K562 (cell line): ENCODE measurements at regions of chr9 and their contacts with region 1.

Region 1: DNA sequence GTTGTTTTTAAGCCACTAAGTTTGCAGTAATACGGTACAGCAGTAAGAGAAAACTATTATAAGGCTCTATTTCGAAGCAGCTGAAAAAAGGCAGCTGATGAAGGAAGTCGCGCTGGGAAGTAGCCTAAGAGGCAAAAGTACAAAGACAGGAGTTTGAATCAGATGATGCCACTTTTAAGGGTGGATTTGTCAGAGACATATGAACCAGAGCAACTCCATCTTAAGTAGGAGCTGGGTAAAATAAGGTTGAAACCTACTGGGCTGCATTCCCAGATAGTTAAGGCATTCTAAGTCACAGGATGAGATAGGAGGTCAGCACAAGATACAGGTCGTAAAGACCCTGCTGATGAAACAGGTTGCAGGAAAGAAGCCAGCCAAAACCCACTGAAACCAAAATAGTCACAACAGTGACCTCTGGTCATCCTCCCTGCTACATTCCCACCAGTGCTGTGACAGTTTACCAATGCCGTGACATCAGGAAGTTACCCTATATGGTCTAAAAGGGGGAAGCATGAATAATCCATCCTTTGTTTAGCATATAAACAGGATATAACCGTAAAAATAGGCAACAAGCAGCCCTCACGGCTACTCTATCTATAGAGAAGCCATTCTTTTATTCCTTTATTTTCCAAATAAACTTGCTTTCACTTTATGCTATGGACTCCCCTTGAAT is 91.8 kb upstream of the PRSS3 start:
- DNase-seq: no peak
- ATAC-seq: no peak
- H3K4me3 ChIP-seq: no peak overlapping the region
- H3K27ac ChIP-seq: no peak overlapping the region
- H3K4me1 ChIP-seq: no peaks in the 10 kb centered on the region
- H3K27me3 ChIP-seq: no peaks in the 10 kb centered on the region
- CTCF ChIP-seq: no peak
- EP300 ChIP-seq: no peak
- POLR2A ChIP-seq: no peak
- RAD21 ChIP-seq: no peak

Region 2: DNA sequence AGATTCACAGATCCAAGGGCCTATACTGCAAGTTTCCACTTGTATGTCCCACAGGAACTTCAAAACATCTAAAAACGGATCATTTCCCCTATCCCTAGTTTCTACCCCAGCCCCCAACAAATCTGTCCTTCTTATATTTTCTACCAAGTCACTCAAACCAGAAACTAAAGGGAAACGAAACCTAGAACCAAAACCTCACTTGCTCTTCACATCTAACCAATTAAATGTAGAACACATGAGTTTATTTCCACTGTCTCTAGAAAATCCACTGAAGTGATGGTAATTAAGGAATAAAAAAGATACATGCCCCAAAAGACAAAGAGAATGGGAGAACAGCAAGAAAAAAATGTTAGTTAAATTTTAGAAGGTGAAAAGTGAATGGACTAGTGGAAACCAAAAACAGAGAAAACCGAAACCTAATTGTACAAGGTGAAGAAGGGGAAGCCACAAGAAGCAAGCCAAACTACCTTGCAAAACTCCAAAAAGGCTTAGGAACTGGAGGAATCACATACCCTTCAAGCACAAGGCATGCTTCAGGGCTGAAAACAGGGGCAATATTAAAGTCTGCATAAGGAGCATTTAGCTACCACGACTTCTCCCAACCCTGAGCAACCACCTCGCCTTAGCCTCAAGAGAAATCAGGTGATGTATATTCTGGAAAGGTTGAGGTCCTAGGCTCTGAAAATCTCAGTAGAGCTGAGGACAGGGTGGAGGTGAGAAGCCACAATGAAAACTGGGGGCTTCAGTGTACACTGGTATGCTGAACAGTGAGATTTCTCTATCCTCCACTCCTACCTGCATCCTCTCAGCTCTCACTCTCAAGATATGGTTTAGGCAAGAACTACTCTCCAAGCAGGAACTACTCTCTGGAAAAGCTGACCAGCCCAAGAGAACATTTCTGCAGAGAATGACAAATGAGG is 638.1 kb before region 1 on chr9:
- CTCF ChIA-PET with region 1: no interaction called
- POLR2A ChIA-PET with region 1: no interaction called
- in situ Hi-C with region 1: no loop called
- intact Hi-C with region 1: no loop called
- DNase-seq: no peak
- ATAC-seq: no peak
- H3K4me3 ChIP-seq: no peak overlapping the region
- H3K27ac ChIP-seq: no peak overlapping the region
- H3K4me1 ChIP-seq: no peaks in the 10 kb centered on the region
- H3K27me3 ChIP-seq: no peaks in the 10 kb centered on the region
- CTCF ChIP-seq: no peak
- EP300 ChIP-seq: no peak
- POLR2A ChIP-seq: no peak
- RAD21 ChIP-seq: no peak

Region 3: DNA sequence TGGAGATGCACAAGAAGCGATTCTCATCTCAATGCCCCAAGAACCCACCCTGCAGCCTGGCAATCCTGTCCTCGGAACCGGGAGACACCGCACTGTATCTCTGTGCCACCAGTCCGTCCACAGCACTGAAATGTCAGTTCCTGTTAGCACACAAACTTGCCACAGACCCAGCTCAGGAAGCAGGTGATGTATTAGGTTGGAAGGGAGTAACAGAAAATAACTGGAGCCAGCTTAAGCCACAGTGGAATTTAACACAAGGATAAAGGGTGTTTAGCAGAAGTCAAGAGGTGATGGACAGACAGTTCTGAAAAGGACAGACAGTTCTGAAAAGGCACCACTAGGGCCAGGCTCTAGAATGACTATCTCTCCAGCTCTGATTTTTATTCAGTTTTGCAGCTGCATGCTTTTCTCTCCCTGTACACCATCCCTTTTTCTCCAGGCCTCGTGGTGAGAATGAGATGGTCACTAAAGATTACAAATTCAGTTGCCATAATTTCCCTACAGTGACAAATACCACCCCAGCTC is 65.1 kb before region 1 on chr9:
- CTCF ChIA-PET with region 1: no interaction called
- POLR2A ChIA-PET with region 1: no interaction called
- in situ Hi-C with region 1: loop called (anchors 10 kb)
- intact Hi-C with region 1: no loop called
- DNase-seq: no peak
- ATAC-seq: no peak
- H3K4me3 ChIP-seq: no peak overlapping the region
- H3K27ac ChIP-seq: no peak overlapping the region
- H3K4me1 ChIP-seq: no peaks in the 10 kb centered on the region
- H3K27me3 ChIP-seq: peaks cover 2 to 13% of the 10 kb centered on the region in 2 experiments; a peak in 4 of 5 replicates
- CTCF ChIP-seq: no peak
- EP300 ChIP-seq: no peak
- POLR2A ChIP-seq: no peak
- RAD21 ChIP-seq: no peak

Region 4: GRCh38 chr9:33852216-33852826 is 148.8 kb after region 1 on chr9:
- CTCF ChIA-PET with region 1: no interaction called
- POLR2A ChIA-PET with region 1: no interaction called
- in situ Hi-C with region 1: no loop called
- intact Hi-C with region 1: no loop called
- DNase-seq: peak in 2 of 4 experiments; percentile 19 to 54
- ATAC-seq: peak; percentile 79
- H3K4me3 ChIP-seq: no peak overlapping the region
- H3K27ac ChIP-seq: no peak overlapping the region
- H3K4me1 ChIP-seq: peaks cover 0 to 2% of the 10 kb centered on the region in 2 experiments; a peak in 2 of 5 replicates
- H3K27me3 ChIP-seq: no peaks in the 10 kb centered on the region
- CTCF ChIP-seq: peak; percentile 49 to 75 (median 68)
- EP300 ChIP-seq: no peak
- POLR2A ChIP-seq: no peak
- RAD21 ChIP-seq: peak; percentile 53 to 68